ENCODE measurements at regions of chr1 and their contacts with region 1.

Region 1: GRCh38 chr1:92291372-92291999 is 7.3 kb downstream of the GLMN start:
- DNase-seq: no peak
- H3K4me3 ChIP-seq: no peak overlapping the region
- H3K27ac ChIP-seq: no peak overlapping the region
- H3K4me1 ChIP-seq: no peaks in the 10 kb centered on the region
- H3K27me3 ChIP-seq: no peaks in the 10 kb centered on the region
- CTCF ChIP-seq: peak in 2 of 3 experiments; percentile 48 to 69; a peak in 2 of 4 replicates
- EP300 ChIP-seq: no peak
- POLR2A ChIP-seq: no peak
- RAD21 ChIP-seq: peak; percentile 76 to 77

Region 2: DNA sequence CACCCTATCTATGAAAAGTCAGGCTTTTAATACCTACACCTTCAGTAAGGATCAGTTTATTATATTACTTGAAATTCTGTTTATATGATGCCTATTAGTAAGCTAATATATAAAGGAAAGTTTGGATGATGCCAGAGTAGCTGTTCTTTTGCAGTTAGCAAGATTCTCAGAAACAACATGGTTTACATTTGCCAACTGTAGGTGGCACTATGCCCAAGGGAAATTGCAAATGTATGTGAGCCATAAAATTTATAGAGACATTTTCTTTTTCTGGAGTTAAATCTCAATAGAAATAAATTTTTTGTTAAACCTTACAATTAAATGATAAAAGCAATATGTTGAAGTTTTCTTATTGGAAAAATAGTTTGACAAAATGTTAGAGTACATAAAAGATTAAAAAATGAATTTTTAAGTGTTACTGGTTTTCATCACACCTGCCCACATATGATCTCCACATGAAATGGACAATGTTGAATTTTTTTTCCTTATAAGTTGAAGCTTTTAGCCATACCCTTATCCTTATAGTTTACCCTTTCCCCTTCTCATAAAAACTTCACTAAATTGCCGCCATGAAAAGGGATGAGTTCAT is 293.8 kb before region 1 on chr1:
- CTCF ChIA-PET with region 1: interaction called, 19 read pairs
- POLR2A ChIA-PET with region 1: no interaction called
- DNase-seq: no peak
- H3K4me3 ChIP-seq: no peak overlapping the region
- H3K27ac ChIP-seq: no peak overlapping the region
- H3K4me1 ChIP-seq: no peaks in the 10 kb centered on the region
- H3K27me3 ChIP-seq: no peaks in the 10 kb centered on the region
- CTCF ChIP-seq: peak in 2 of 3 experiments; percentile 56 to 61; a peak in 2 of 4 replicates
- EP300 ChIP-seq: no peak
- POLR2A ChIP-seq: no peak
- RAD21 ChIP-seq: peak; percentile 80 to 87

Region 3: DNA sequence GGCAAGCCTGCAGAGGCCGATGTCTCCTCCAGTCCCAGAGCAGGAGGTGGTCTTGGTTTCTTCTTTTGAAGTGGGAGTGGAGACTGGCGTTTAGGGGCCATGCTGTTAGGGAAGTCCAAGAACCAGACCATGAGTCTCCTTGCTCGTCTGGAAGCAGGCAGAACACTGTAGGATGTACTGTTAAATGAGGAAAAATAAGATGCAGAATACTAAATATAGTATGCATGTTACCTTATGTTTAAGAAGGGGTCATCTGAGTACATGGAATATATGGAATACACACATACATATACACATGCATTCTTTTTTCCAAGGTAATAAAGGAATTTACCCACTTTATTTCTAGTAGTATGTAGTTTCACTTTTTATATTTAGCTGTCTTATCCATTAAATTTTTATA is 216.2 kb before region 1 on chr1 and contains the start of gene SETSIP:
- CTCF ChIA-PET with region 1: no interaction called
- POLR2A ChIA-PET with region 1: no interaction called
- DNase-seq: no peak
- H3K4me3 ChIP-seq: no peak within 1 kb of the TSS
- H3K27ac ChIP-seq: no peak within 1 kb of the TSS
- H3K4me1 ChIP-seq: peaks cover 0 to 3% (median 1%) of the 10 kb centered on the region in 4 experiments; a peak in 3 of 7 replicates
- H3K27me3 ChIP-seq: no peaks in the 10 kb centered on the region
- CTCF ChIP-seq: no peak
- EP300 ChIP-seq: no peak
- POLR2A ChIP-seq: no peak
- RAD21 ChIP-seq: no peak
- total RNA-seq, gene SETSIP: not detected in 2 replicates

Region 4: GRCh38 chr1:92273039-92273438 is 18.4 kb before region 1 on chr1:
- CTCF ChIA-PET with region 1: no interaction called
- POLR2A ChIA-PET with region 1: no interaction called
- DNase-seq: no peak
- H3K4me3 ChIP-seq: no peak overlapping the region
- H3K27ac ChIP-seq: no peak overlapping the region
- H3K4me1 ChIP-seq: no peaks in the 10 kb centered on the region
- H3K27me3 ChIP-seq: no peaks in the 10 kb centered on the region
- CTCF ChIP-seq: no peak
- EP300 ChIP-seq: no peak
- POLR2A ChIP-seq: no peak
- RAD21 ChIP-seq: no peak

Region 5: DNA sequence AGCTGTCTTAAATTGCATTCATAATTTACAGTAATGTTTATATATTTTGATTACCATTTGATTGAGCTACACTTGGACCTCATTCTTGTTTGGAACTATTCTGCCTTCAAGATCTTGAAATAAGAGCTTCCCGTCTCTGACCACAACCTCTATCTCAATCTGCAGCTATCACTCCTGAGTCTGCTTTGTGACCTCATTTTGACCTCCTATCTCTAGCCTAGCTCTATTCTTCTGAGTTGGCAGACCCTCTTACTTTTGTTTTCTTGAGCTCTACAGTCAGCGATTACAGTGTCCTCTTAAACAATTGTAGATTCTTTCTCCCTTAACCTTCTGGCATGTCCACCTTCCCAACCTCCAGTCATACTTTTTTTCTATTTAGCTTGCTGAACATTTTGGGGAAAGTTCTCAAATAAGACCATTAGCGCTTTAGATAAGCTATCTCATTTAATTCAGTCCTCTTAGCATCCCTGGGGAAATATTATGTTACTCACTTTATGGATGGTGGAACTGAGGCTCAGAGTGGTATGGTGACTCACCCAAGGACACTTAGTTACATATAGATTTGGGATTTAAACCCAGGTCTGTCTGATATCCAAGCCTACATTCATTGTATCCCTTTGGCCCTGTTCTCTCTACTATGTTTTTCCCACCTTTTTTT is 26.5 kb after region 1 on chr1:
- CTCF ChIA-PET with region 1: no interaction called
- POLR2A ChIA-PET with region 1: no interaction called
- DNase-seq: no peak
- H3K4me3 ChIP-seq: no peak overlapping the region
- H3K27ac ChIP-seq: no peak overlapping the region
- H3K4me1 ChIP-seq: no peaks in the 10 kb centered on the region
- H3K27me3 ChIP-seq: no peaks in the 10 kb centered on the region
- CTCF ChIP-seq: no peak
- EP300 ChIP-seq: no peak
- POLR2A ChIP-seq: no peak
- RAD21 ChIP-seq: no peak

Region 6: DNA sequence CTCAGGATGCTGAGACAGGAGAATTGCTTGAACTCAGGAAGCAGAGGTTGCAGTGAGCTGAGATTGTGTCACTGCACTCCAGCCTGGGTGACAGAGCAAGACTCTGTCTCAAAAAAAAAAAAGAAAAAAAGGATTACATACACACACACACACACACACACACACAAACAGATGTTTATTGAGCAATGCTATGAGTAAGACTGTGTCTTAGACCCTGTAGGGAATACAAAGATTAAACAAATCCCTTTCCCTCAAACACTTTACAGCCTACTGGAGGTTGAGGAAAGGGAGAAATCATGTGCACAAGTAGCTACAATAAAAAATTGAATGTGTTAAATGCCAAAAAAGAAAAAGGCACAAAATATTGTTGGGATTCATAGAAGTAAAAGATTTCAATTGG is 65.5 kb after region 1 on chr1:
- CTCF ChIA-PET with region 1: no interaction called
- POLR2A ChIA-PET with region 1: no interaction called
- DNase-seq: no peak
- H3K4me3 ChIP-seq: no peak overlapping the region
- H3K27ac ChIP-seq: no peak overlapping the region
- H3K4me1 ChIP-seq: no peaks in the 10 kb centered on the region
- H3K27me3 ChIP-seq: no peaks in the 10 kb centered on the region
- CTCF ChIP-seq: no peak
- EP300 ChIP-seq: no peak
- POLR2A ChIP-seq: no peak
- RAD21 ChIP-seq: no peak

Measured in H1 (cell line).